AG04450 (cell line): ENCODE measurements at regions of chr1 and their contacts with region 1.

Region 1: DNA sequence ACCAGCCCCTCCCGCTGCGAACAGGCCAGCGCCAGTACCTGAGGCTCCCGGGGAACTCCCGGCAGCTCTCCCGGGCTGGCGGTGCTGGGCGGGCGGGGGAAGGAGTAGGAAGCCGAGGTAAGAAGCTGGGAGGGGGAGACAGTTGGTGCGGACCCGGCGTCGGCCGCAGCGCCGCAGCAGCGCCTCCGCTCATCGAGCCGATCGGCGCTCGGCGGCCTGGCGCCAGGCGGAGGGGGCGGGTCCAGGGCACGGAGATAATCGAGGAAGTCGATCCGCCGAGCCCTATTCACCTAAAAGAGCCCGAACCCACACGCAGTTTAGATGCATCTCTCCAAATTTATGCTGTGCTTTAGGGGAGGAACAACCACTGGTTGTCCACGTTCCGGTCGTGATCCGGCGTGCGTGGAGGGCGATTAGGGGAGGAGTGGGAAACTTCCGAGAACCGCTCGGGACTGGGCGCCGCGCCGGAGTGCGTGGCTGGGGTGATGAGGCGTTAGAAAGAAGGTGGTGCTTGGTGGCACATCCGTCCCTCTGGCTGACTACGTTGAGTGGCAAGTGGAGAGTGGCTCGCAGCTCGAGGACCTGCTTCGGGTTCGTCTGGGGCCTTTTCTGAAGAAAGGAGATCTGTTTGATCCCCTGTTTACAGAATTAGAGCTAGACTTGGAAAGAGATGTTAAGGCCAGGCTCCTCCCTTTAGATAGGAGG is at the start of gene VAMP4:
- DNase-seq: no peak
- H3K4me3 ChIP-seq: peak within 1 kb of the TSS; percentile 90
- H3K27ac ChIP-seq: peak within 1 kb of the TSS; percentile 95
- H3K27me3 ChIP-seq: no peaks in the 10 kb centered on the region
- CTCF ChIP-seq: no peak
- polyA plus RNA-seq, gene VAMP4: 13.0 and 20.8 TPM in 2 replicates

Region 2: GRCh38 chr1:171581226-171581625 is 160.8 kb before region 1 on chr1:
- CTCF ChIA-PET with region 1: interaction called, 10 read pairs
- POLR2A ChIA-PET with region 1: no interaction called
- DNase-seq: no peak
- H3K4me3 ChIP-seq: no peak overlapping the region
- H3K27ac ChIP-seq: no peak overlapping the region
- H3K27me3 ChIP-seq: no peaks in the 10 kb centered on the region
- CTCF ChIP-seq: no peak

Region 3: GRCh38 chr1:171754353-171754705 is 12.3 kb after region 1 on chr1:
- CTCF ChIA-PET with region 1: interaction called, 3 read pairs
- POLR2A ChIA-PET with region 1: interaction called, 42 read pairs
- DNase-seq: peak; percentile 85
- H3K4me3 ChIP-seq: no peak overlapping the region
- H3K27ac ChIP-seq: peak overlapping the region; percentile 97
- H3K27me3 ChIP-seq: no peaks in the 10 kb centered on the region
- CTCF ChIP-seq: no peak

Region 4: GRCh38 chr1:171781176-171781875 is 39.3 kb after region 1 on chr1 and contains the start of gene METTL13:
- CTCF ChIA-PET with region 1: interaction called, 4 read pairs
- POLR2A ChIA-PET with region 1: interaction called, 50 read pairs
- DNase-seq: peak; percentile 98
- H3K4me3 ChIP-seq: peak within 1 kb of the TSS; percentile 99
- H3K27ac ChIP-seq: peak within 1 kb of the TSS; percentile 86
- H3K27me3 ChIP-seq: no peaks in the 10 kb centered on the region
- CTCF ChIP-seq: no peak
- polyA plus RNA-seq, gene METTL13: 32.0 and 32.9 TPM in 2 replicates

Region 5: GRCh38 chr1:172144445-172145061 is 402.5 kb after region 1 on chr1:
- CTCF ChIA-PET with region 1: no interaction called
- POLR2A ChIA-PET with region 1: no interaction called
- DNase-seq: peak; percentile 94
- H3K4me3 ChIP-seq: peak overlapping the region; percentile 84
- H3K27ac ChIP-seq: peak overlapping the region; percentile 96
- H3K27me3 ChIP-seq: no peaks in the 10 kb centered on the region
- CTCF ChIP-seq: no peak